Activated CD4-positive, alpha-beta T cell treated with anti-CD3 and anti-CD28 coated beads, Interleukin-2, amount 10 ng/mL, durations not matched to agents 24 days and 14 days (primary cell): ENCODE measurements at regions of chr10 and their contacts with region 1.

Region 1: DNA sequence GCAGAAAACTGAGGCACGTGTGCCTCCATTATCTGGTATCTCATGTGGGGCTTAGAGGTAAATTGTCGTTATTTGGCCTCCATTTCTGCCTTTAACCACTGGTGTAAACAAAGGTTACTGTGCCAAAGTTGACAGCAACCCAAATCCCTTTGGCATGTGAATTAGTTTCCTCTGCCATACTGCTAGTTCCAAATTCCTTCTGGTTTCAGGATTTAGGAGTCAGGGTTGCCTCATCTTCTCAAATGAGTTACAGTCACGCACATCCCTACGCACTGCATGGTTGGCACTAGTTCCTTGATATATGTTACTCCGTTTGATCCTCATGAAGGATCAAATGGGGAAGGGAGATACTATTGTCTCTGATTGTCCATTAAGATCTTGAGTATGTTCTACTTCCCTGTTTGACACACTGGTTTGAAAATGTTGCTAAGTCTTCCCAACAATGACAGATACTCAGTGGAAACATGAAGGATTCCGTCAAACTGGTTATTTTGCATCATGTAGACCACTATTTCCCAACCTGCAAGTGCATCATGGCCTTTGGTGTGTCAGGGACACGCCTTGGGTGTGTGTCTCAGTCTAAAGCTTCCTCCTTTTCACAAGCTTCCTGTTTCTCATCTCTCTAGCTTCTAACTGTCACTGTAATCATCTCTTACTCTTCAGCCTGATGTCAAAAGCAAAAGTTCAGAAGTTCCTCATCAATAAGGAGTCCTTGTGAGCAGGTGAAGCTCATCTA is at the start of gene LIPN:
- DNase-seq: no peak
- H3K4me3 Mint-ChIP-seq: no peak within 1 kb of the TSS
- H3K27ac Mint-ChIP-seq: no peak within 1 kb of the TSS
- H3K4me1 Mint-ChIP-seq: peaks cover 9% of the 10 kb centered on the region
- H3K27me3 Mint-ChIP-seq: peaks cover 30% of the 10 kb centered on the region
- total RNA-seq, gene LIPN: not detected in 2 replicates

Region 2: GRCh38 chr10:88707429-88708285 is 51.9 kb before region 1 on chr10:
- intact Hi-C with region 1: loop called (anchors 5 kb)
- DNase-seq: no peak
- H3K4me3 Mint-ChIP-seq: no peak overlapping the region
- H3K27ac Mint-ChIP-seq: peak overlapping the region; percentile 1
- H3K4me1 Mint-ChIP-seq: peaks cover 15% of the 10 kb centered on the region
- H3K27me3 Mint-ChIP-seq: peaks cover 28% of the 10 kb centered on the region